Transverse colon (tissue), 4 donors: ENCODE measurements at regions of chr6 and their contacts with region 1.

Region 1: GRCh38 chr6:32796848-32797776 is 19.7 kb downstream of the HLA-DOB start:
- DNase-seq: peak; percentile 81
- H3K4me3 ChIP-seq: peak overlapping the region in 1 of 4 donors; percentile 19
- H3K27ac ChIP-seq: no peak overlapping the region
- H3K4me1 ChIP-seq: peaks cover 0 to 7% (median 2%) of the 10 kb centered on the region in 4 donors
- H3K27me3 ChIP-seq: peaks cover 82% of the 10 kb centered on the region
- CTCF ChIP-seq: peak; percentile 89 to 93 (median 91)
- EP300 ChIP-seq: no peak
- POLR2A ChIP-seq: no peak

Region 2: GRCh38 chr6:32413427-32414047 is 383.6 kb before region 1 on chr6:
- in situ Hi-C with region 1: loop called (anchors 5 to 10 kb)
- intact Hi-C with region 1: loop called (anchors 5 kb)
- DNase-seq: peak; percentile 84
- H3K4me3 ChIP-seq: no peak overlapping the region
- H3K27ac ChIP-seq: no peak overlapping the region
- H3K4me1 ChIP-seq: peaks cover 0 to 28% (median 13%) of the 10 kb centered on the region in 4 donors
- H3K27me3 ChIP-seq: peaks cover 76% of the 10 kb centered on the region
- CTCF ChIP-seq: peak; percentile 91 to 98 (median 95)
- EP300 ChIP-seq: no peak
- POLR2A ChIP-seq: no peak

Region 3: DNA sequence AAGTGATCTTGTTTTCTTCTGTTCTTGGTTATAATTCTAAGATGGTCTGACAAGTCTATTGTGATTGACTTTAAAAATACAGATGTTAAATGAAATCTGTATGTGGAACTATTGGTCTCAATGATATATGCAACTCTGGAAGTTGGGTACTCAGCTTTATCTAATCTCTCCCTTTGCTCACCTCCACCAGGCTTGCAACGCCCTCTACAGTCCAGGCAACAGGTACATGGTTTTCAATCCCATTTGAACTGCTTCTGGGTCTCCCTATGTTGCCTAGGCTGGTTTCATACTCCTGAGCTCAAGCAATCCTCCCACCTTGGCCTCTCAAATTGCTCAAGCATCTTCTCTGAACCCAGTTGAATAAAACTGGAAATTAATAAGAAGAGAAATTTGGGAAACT is 105.1 kb before region 1 on chr6:
- in situ Hi-C with region 1: loop called in 2 of 4 experiments (anchors 5 to 10 kb)
- intact Hi-C with region 1: no loop called
- DNase-seq: peak; percentile 54
- H3K4me3 ChIP-seq: no peak overlapping the region
- H3K27ac ChIP-seq: no peak overlapping the region
- H3K4me1 ChIP-seq: no peaks in the 10 kb centered on the region
- H3K27me3 ChIP-seq: peaks cover 38% of the 10 kb centered on the region
- CTCF ChIP-seq: peak; percentile 25 to 52 (median 49)
- EP300 ChIP-seq: no peak
- POLR2A ChIP-seq: no peak